ENCODE measurements at regions of chr20 and their contacts with region 1.

Region 1: GRCh38 chr20:44885392-44886265 is at the start of gene YWHAB:
- DNase-seq: peak; percentile 96 to 99
- H3K4me3 ChIP-seq: peak within 1 kb of the TSS; percentile 78 to 91
- H3K27ac ChIP-seq: peak within 1 kb of the TSS; percentile 96 to 97
- H3K4me1 ChIP-seq: peaks cover 0 to 28% of the 10 kb centered on the region in 2 donors
- H3K27me3 ChIP-seq: no peaks in the 10 kb centered on the region
- CTCF ChIP-seq: no peak
- total RNA-seq, gene YWHAB: 50.4 TPM

Region 2: GRCh38 chr20:44960103-44960852 is 74.6 kb after region 1 on chr20 and contains the start of gene TOMM34:
- intact Hi-C with region 1: loop called (anchors 1 kb)
- DNase-seq: peak; percentile 80 to 97
- H3K4me3 ChIP-seq: peak within 1 kb of the TSS; percentile 79 to 89
- H3K27ac ChIP-seq: peak within 1 kb of the TSS; percentile 79 to 87
- H3K4me1 ChIP-seq: peaks cover 0 to 11% of the 10 kb centered on the region in 2 donors
- H3K27me3 ChIP-seq: no peaks in the 10 kb centered on the region
- CTCF ChIP-seq: peak in 1 of 3 experiments; percentile 8
- total RNA-seq, gene TOMM34: 11.1 TPM

Region 3: GRCh38 chr20:45104786-45105185 is 219.2 kb after region 1 on chr20:
- intact Hi-C with region 1: no loop called
- DNase-seq: no peak
- H3K4me3 ChIP-seq: no peak overlapping the region
- H3K27ac ChIP-seq: no peak overlapping the region
- H3K4me1 ChIP-seq: no peaks in the 10 kb centered on the region
- H3K27me3 ChIP-seq: no peaks in the 10 kb centered on the region
- CTCF ChIP-seq: no peak